Sciatic nerve (tissue), 2 donors: ENCODE measurements at regions of chr5 and their contacts with region 1.

Region 1: DNA sequence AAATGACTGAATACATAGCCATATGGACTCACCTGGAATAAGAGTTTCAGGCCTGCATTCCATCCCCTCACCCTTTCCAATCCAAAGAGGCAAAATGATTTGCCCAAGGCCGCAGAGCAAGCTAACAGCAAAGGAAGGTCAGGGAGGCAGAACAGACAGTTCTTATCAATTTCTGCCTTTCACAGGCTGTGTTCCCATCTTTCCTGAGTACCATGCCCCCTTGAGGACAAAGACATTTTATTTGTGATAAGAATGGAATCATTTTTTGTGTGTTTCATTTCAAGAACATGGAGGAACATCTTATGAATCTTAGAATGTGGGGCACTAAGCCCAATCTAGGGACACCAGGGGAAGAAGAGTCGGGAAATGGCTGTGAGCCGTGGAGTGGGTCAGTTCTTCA is 13.9 kb downstream of the LHFPL2 start:
- DNase-seq: no peak
- ATAC-seq: no peak

Region 2: GRCh38 chr5:78095125-78095524 is 539.5 kb before region 1 on chr5:
- intact Hi-C with region 1: no loop called
- DNase-seq: no peak
- ATAC-seq: no peak

Region 3: DNA sequence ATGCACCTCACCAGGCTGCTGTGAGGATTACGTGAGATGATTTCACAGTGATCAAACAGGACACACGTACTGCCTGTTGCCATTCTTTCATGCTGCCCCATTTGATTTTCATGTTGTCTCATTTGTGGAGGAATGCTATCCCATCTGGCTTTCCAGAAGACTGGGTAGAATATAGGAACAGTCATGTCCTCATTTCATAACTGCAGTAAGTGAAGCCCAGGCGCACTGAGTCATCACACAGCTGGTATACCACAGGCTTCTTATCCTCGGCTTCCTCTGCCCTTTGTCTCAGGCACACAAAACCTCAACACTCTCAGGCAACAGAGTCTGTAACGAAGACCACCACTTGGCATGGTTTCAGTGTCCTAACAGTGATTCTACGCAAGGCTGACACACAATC is 48.4 kb before region 1 on chr5:
- intact Hi-C with region 1: no loop called
- DNase-seq: no peak
- ATAC-seq: no peak

Region 4: GRCh38 chr5:78920604-78921003 is 286.0 kb after region 1 on chr5:
- intact Hi-C with region 1: no loop called
- DNase-seq: no peak
- ATAC-seq: peak; percentile 65

Region 5: GRCh38 chr5:79200573-79201183 is 566.0 kb after region 1 on chr5:
- intact Hi-C with region 1: loop called (anchors 5 kb)
- DNase-seq: no peak
- ATAC-seq: no peak